ENCODE measurements at regions of chr1 and their contacts with region 1.

Region 1: GRCh38 chr1:7069931-7070330 is 284.7 kb downstream of the CAMTA1 start:
- DNase-seq: no peak
- ATAC-seq: peak; percentile 32 to 71 (median 50)
- H3K4me3 ChIP-seq: peak overlapping the region; percentile 15 to 36 (median 26)
- H3K27ac ChIP-seq: no peak overlapping the region
- H3K4me1 ChIP-seq: peaks cover 0 to 4% (median 0%) of the 10 kb centered on the region in 4 donors
- H3K27me3 ChIP-seq: no peaks in the 10 kb centered on the region
- CTCF ChIP-seq: no peak
- POLR2A ChIP-seq: no peak

Region 2: DNA sequence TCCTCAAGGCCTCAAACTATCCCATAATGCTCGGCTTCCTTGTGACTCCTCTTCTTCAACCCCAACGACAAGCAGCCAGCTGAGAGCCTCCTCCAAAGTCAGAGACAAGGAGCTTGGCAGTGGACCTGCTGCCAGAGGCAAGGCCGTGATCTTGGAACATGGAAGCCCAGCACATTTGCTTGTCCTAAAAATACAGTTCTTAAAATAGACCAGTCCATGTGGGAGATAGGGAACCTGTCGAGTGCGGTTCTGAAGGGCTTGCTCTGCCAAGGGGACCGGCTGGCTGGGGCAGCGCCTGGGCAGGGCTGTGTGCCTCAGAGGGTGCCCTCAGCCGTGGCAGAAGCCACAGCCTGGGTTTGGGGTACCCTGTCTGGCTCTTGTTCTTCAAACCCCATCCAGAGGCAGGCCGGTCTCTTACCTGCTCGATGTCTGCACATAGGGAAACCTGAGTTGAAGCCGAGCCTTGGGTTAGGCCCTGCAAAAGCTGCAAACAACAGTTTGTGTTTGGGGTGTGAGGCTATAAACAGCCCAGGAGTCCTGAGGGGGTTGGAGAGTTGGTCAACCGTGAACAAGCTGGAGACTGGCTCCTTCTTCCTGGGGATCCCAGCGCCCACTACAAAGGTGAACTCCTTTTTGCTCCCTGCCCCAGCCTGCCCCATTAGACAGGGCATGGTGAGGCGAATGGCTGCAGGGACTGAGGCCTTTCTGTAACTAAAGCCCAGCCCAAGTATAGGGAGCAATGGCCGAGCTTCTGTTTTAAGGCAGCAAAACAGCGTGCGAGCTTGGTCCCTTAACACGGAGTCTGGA is 55.9 kb before region 1 on chr1:
- intact Hi-C with region 1: no loop called
- DNase-seq: no peak
- ATAC-seq: no peak
- H3K4me3 ChIP-seq: no peak overlapping the region
- H3K27ac ChIP-seq: no peak overlapping the region
- H3K4me1 ChIP-seq: peaks cover 0 to under 1% (median 0%) of the 10 kb centered on the region in 4 donors
- H3K27me3 ChIP-seq: no peaks in the 10 kb centered on the region
- CTCF ChIP-seq: no peak
- POLR2A ChIP-seq: no peak

Region 3: GRCh38 chr1:7616076-7616832 is 546.3 kb after region 1 on chr1:
- intact Hi-C with region 1: loop called in 1 of 2 experiments (anchors 10 kb)
- DNase-seq: peak in 2 of 3 donors; percentile 56 to 69
- ATAC-seq: peak; percentile 37 to 69 (median 51)
- H3K4me3 ChIP-seq: no peak overlapping the region
- H3K27ac ChIP-seq: no peak overlapping the region
- H3K4me1 ChIP-seq: peaks cover 0 to 6% (median 3%) of the 10 kb centered on the region in 4 donors
- H3K27me3 ChIP-seq: no peaks in the 10 kb centered on the region
- CTCF ChIP-seq: no peak
- POLR2A ChIP-seq: no peak